ENCODE measurements at regions of chr2 and their contacts with region 1.

Region 1: DNA sequence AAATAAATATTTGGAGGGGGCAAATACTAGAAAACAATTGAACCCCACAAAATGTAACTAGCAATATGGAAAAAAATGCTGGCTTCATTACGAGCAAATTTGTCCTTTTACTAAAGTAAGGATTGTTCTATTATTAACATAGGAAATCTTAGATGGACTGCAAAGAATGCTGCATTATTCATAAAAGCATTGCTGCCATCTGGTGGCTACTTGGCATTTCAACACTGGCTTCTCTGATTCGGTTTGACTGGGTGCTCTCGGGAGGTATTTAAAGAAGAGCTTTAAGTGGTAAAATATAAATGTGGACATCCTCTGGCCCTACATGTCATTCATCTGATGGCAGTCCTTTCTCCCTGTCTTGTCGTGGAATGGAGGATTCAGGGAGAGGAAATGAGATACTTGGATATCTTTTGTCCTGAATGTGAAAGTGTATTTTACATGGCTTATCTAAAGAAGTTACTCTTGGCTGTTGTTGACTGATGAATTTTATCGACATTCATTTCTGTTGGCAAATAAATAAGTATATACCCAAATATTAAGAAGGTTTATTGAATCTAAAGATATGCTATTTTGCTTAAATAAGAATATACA is 130.2 kb downstream of the ARHGAP15 start:
- DNase-seq: peak; percentile 84
- H3K4me3 ChIP-seq: no peak overlapping the region
- H3K27ac ChIP-seq: no peak overlapping the region
- H3K4me1 ChIP-seq: peaks cover 9% of the 10 kb centered on the region
- H3K27me3 ChIP-seq: peaks cover 5% of the 10 kb centered on the region
- CTCF ChIP-seq: peak; percentile 83

Region 2: DNA sequence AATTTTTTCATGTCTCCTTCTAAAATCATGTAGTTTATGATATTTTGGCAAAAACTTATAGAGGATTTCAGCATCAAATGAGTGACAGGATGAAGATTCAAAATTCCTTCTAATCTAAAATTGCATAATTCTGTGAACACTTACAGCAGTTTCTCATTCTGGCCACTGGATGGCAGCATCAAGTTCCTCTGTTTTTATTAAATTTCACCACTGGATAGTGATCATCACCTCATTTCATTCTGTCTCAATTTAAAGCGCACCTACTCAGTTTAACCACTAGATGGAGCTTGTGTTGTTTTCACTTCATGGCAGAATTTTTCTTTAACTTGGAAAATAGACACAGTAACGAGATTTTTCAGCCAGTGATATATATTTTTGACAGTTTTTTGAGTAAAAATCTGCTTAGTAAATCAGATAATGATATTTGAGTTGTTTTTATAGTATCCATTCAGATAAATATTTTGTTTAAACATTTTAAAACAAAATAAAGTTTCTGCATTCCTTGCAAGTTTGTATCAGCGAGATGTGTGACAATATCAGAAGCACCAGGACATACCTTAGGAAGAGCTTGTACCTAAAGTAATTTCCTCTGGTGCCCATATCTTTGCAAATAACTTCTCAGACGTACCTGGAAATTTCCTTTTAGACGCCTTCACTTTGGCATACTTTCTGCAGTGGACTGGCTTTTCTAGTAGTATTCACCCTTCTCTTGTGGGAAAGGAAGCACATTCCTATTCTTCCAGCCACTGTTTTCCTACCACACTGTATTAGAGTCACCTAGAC is 225.0 kb before region 1 on chr2:
- CTCF ChIA-PET with region 1: no interaction called
- POLR2A ChIA-PET with region 1: no interaction called
- intact Hi-C with region 1: loop called (anchors 2 kb)
- DNase-seq: peak; percentile 89
- H3K4me3 ChIP-seq: no peak overlapping the region
- H3K27ac ChIP-seq: no peak overlapping the region
- H3K4me1 ChIP-seq: no peaks in the 10 kb centered on the region
- H3K27me3 ChIP-seq: no peaks in the 10 kb centered on the region
- CTCF ChIP-seq: peak; percentile 99

Region 3: GRCh38 chr2:143110758-143111428 is 148.6 kb before region 1 on chr2:
- CTCF ChIA-PET with region 1: interaction called, 12 read pairs
- POLR2A ChIA-PET with region 1: no interaction called
- intact Hi-C with region 1: loop called (anchors 2 kb)
- DNase-seq: peak; percentile 88
- H3K4me3 ChIP-seq: no peak overlapping the region
- H3K27ac ChIP-seq: no peak overlapping the region
- H3K4me1 ChIP-seq: no peaks in the 10 kb centered on the region
- H3K27me3 ChIP-seq: no peaks in the 10 kb centered on the region
- CTCF ChIP-seq: peak; percentile 83

Region 4: GRCh38 chr2:143162123-143162837 is 97.2 kb before region 1 on chr2:
- CTCF ChIA-PET with region 1: interaction called, 11 read pairs
- POLR2A ChIA-PET with region 1: no interaction called
- intact Hi-C with region 1: loop called (anchors 5 kb)
- DNase-seq: peak; percentile 62
- H3K4me3 ChIP-seq: no peak overlapping the region
- H3K27ac ChIP-seq: no peak overlapping the region
- H3K4me1 ChIP-seq: no peaks in the 10 kb centered on the region
- H3K27me3 ChIP-seq: peaks cover 4% of the 10 kb centered on the region
- CTCF ChIP-seq: peak; percentile 75

Region 5: DNA sequence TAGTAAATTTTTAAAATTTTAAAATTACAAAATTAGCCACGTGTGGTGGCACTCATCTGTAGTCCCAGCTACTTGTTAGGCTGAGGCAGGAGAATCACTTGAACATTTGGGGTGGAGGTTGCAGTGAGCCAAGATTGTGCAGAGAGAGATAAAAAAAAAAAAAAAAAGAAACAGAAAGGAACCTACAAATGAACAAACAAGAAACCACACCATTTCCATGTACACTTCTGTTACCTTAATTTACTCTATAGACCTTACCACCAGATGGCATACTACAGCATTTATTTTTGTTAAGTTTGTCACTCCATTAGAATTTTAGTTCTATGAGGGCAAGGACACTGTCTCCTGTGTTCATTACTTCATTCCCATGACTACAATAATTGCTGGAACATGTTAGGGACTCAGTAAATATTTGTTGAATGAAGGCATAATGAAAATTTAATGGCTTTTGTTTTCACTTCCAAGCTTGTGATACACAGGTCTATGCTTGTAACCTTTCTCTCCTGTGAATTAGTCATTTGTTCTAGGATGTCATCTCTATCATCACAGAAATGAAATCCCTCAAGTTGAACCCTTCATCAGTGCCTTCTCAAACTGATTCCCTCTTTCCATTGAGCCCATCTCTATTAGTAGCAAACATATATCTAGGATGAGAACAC is 54.2 kb before region 1 on chr2:
- CTCF ChIA-PET with region 1: no interaction called
- POLR2A ChIA-PET with region 1: no interaction called
- intact Hi-C with region 1: loop called (anchors 5 kb)
- DNase-seq: peak; percentile 43
- H3K4me3 ChIP-seq: no peak overlapping the region
- H3K27ac ChIP-seq: no peak overlapping the region
- H3K4me1 ChIP-seq: no peaks in the 10 kb centered on the region
- H3K27me3 ChIP-seq: no peaks in the 10 kb centered on the region
- CTCF ChIP-seq: peak; percentile 56

Region 6: DNA sequence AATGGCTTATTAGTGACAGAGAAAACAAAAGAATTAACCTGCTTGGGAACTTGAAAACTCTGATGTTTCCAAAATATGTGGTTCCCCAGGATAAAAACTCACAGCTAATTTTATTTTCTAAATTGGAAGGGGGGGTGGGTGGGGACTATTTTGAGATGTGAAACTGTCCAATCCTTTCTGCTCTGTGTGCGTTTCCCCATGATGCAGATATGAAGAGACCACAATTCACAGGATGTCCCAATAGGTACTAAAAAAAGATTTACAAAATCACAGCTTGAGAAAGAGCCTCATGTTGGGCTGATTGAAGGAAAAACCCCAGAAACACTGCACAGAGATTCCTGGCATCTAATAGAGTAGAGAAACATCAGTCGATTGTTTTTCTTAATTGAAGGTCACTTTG is 143.0 kb after region 1 on chr2:
- CTCF ChIA-PET with region 1: interaction called, 10 read pairs
- POLR2A ChIA-PET with region 1: no interaction called
- intact Hi-C with region 1: no loop called
- DNase-seq: no peak
- H3K4me3 ChIP-seq: no peak overlapping the region
- H3K27ac ChIP-seq: no peak overlapping the region
- H3K4me1 ChIP-seq: peaks cover 7% of the 10 kb centered on the region
- H3K27me3 ChIP-seq: no peaks in the 10 kb centered on the region
- CTCF ChIP-seq: no peak